Activated CD4-positive, alpha-beta T cell treated with anti-CD3 and anti-CD28 coated beads, Interleukin-2, amount 10 ng/mL, durations not matched to agents 7 days and 5 days (primary cell): ENCODE measurements at regions of chr16 and their contacts with region 1.

Region 1: DNA sequence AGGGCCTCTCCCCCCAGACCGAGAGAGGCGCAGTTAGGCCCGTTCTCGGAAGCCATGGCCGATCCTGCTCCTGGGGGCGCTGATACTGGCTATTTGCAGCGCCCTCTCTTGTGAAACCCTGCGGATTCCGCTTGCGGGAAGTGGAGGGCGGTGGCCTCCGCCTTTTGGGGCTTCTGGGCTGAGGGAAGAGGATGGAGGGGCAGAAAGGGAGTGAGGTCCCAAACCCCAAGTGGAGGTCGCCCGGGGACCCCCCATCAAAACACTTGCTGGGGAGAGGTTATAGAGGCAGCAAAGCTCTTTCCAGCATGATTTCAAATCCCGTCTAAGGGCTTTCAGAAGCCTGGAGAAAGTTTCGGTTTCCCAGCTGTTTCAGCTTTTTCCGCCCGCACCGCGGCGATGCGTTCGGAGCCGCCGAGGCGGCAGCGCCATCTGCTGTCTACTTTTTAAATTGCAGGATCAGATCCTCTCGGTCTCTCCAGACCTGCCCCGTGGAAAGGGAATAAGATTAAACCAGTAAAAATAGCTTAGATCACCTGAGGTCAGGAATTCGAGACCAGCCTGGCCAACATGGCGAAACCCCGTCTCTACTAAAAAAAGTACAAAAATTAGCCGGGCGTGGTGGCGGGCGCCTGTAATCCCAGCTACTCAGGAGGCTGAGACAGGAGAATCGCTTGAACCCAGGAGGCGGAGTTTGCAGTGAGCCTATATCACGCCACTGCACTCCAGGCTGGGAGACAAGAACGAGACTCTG is 15.8 kb downstream of the SNX20 start:
- DNase-seq: peak; percentile 88
- H3K4me3 Mint-ChIP-seq: peak overlapping the region; percentile 65
- H3K27ac Mint-ChIP-seq: peak overlapping the region; percentile 92
- H3K4me1 Mint-ChIP-seq: peaks cover 49% of the 10 kb centered on the region
- H3K27me3 Mint-ChIP-seq: no peaks in the 10 kb centered on the region

Region 2: DNA sequence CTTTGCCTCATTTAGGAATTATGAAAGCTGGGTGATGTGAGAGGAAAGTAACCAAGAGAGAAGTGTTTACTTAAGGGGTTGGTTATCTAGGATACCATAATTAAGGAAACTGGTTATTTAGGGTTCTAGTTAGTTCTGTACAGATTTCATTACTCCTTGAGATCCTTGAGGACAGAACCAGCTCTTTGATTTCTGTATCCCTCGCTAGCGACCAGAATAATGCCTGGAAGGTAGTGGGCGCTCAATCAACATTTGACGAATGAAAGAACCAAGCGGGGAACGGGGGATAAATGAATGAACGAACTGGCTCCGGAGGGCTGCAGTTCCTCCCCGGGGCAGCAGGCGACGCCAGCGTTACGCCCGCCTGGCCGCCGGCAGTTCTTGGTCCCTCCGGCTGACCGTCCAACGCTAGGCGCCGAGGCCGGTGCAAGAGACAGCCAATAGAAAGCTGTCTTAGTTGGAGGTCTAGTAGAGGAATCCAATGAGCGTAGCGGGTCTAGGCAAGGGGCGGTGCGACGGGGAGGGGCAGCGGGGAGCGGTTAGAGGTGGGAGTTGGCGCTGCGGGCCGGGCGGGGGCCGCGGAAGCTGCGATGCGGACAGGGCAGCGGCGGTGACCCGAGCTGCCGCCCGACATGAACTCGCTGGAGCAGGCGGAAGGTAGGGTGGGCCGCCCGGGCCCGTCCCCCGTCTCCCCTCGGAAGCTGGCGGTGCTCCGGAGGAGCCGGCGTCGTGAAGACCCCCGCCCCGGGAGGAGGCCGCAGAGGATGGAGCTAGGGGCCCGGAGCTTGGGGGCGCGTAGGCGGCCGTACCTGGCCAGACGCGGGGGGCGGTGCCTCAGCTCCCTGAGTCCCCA is 640.4 kb before region 1 on chr16 and contains the start of gene CNEP1R1:
- CTCF ChIA-PET with region 1: interaction called, 25 read pairs
- POLR2A ChIA-PET with region 1: no interaction called
- DNase-seq: peak; percentile 93
- H3K4me3 Mint-ChIP-seq: peak within 1 kb of the TSS; percentile 94
- H3K27ac Mint-ChIP-seq: peak within 1 kb of the TSS; percentile 95
- H3K4me1 Mint-ChIP-seq: peaks cover 23% of the 10 kb centered on the region
- H3K27me3 Mint-ChIP-seq: no peaks in the 10 kb centered on the region
- total RNA-seq, gene CNEP1R1: 22.7 to 29.1 TPM

Region 3: GRCh38 chr16:50611332-50611934 is 53.9 kb before region 1 on chr16:
- CTCF ChIA-PET with region 1: interaction called, 10 read pairs
- POLR2A ChIA-PET with region 1: no interaction called
- DNase-seq: no peak
- H3K4me3 Mint-ChIP-seq: no peak overlapping the region
- H3K27ac Mint-ChIP-seq: peak overlapping the region; percentile 37
- H3K4me1 Mint-ChIP-seq: peaks cover 9% of the 10 kb centered on the region
- H3K27me3 Mint-ChIP-seq: no peaks in the 10 kb centered on the region

Region 4: GRCh38 chr16:50653633-50654519 is 11.4 kb before region 1 on chr16:
- CTCF ChIA-PET with region 1: interaction called, 44 read pairs
- POLR2A ChIA-PET with region 1: interaction called, 3 read pairs
- DNase-seq: no peak
- H3K4me3 Mint-ChIP-seq: no peak overlapping the region
- H3K27ac Mint-ChIP-seq: no peak overlapping the region
- H3K4me1 Mint-ChIP-seq: no peaks in the 10 kb centered on the region
- H3K27me3 Mint-ChIP-seq: no peaks in the 10 kb centered on the region

Region 5: DNA sequence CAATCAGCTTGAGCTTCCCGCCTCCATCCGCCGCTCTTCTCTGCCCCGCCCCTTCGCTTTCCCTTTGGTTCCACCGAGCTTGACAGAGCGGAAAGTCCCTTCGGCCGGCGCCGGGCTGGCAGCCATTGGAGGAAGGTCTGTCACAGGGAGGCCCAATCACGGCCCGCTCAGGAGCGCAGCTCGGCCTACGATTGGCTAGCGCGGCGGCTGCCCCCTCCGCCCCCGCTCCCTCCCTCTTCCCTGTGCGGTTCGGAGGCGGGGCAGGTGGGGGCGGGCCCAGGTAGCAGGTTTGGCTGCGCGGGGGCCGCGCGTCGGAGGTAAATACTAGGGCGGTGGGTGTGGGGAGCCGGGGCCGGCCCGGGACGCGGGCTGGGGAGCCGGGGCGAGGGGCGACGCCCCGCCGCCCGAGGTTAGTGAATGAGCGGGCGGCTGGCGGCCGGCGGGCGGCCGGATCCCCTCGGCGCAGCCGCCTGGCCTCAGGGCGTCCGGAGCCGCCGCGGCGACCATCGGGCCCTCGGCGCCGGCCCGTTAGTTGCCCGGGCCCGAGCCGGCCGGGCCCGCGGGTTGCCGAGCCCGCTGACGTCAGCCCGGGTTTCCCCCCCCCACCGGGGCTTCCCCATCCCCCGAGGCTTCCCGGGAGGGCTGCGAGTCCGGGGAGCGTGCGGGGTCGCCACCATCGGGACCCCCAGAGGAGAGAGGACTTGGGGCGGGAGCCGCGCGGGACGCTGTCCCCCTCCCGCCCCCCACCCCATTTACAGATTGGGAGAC is 76.7 kb after region 1 on chr16 and contains the start of gene CYLD:
- CTCF ChIA-PET with region 1: interaction called, 17 read pairs
- POLR2A ChIA-PET with region 1: interaction called, 13 read pairs
- DNase-seq: peak; percentile 100
- H3K4me3 Mint-ChIP-seq: peak within 1 kb of the TSS; percentile 95
- H3K27ac Mint-ChIP-seq: peak within 1 kb of the TSS; percentile 98
- H3K4me1 Mint-ChIP-seq: peaks cover 37% of the 10 kb centered on the region
- H3K27me3 Mint-ChIP-seq: no peaks in the 10 kb centered on the region
- total RNA-seq, gene CYLD: 200 to 222 TPM

Region 6: GRCh38 chr16:50806099-50807062 is 141.1 kb after region 1 on chr16:
- CTCF ChIA-PET with region 1: interaction called, 50 read pairs
- POLR2A ChIA-PET with region 1: interaction called, 3 read pairs
- DNase-seq: peak; percentile 90
- H3K4me3 Mint-ChIP-seq: peak overlapping the region; percentile 59
- H3K27ac Mint-ChIP-seq: peak overlapping the region; percentile 71
- H3K4me1 Mint-ChIP-seq: peaks cover 17% of the 10 kb centered on the region
- H3K27me3 Mint-ChIP-seq: no peaks in the 10 kb centered on the region